ENCODE measurements at regions of chr12 and their contacts with region 1.

Region 1: GRCh38 chr12:89244536-89244935 is 107.8 kb downstream of the DUSP6 start:
- DNase-seq: peak; percentile 57
- H3K4me3 Mint-ChIP-seq: peak overlapping the region; percentile 36
- H3K27ac Mint-ChIP-seq: peak overlapping the region; percentile 73
- H3K4me1 Mint-ChIP-seq: peaks cover 33% of the 10 kb centered on the region
- H3K27me3 Mint-ChIP-seq: no peaks in the 10 kb centered on the region

Region 2: DNA sequence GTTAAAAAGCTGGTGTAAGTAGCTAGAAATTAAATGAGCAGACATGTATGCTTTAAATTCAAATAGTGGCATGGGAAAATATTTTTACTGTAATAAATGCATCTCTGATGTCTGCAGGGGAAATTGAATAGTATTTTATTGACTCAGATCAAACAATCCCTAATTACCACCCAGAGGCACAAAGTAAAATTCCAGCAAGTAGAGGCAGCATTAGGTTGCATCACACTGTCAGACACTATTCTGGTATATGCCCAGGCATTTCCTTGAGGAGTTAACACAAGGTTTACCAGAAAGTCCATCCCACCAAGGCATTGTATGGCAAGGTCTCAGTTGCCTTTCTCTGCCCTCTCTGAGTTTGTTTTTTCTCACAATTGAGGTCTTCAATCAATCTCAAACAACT is 462.6 kb before region 1 on chr12:
- CTCF ChIA-PET with region 1: no interaction called
- intact Hi-C with region 1: no loop called
- DNase-seq: no peak
- H3K4me3 Mint-ChIP-seq: no peak overlapping the region
- H3K27ac Mint-ChIP-seq: no peak overlapping the region
- H3K4me1 Mint-ChIP-seq: no peaks in the 10 kb centered on the region
- H3K27me3 Mint-ChIP-seq: no peaks in the 10 kb centered on the region

Region 3: GRCh38 chr12:89073027-89073398 is 171.5 kb before region 1 on chr12:
- CTCF ChIA-PET with region 1: no interaction called
- intact Hi-C with region 1: loop called (anchors 1 kb)
- DNase-seq: peak; percentile 32
- H3K4me3 Mint-ChIP-seq: no peak overlapping the region
- H3K27ac Mint-ChIP-seq: peak overlapping the region; percentile 57
- H3K4me1 Mint-ChIP-seq: peaks cover 36% of the 10 kb centered on the region
- H3K27me3 Mint-ChIP-seq: no peaks in the 10 kb centered on the region

Region 4: GRCh38 chr12:89181271-89181920 is 63.1 kb before region 1 on chr12:
- CTCF ChIA-PET with region 1: no interaction called
- intact Hi-C with region 1: loop called (anchors 1 kb)
- DNase-seq: no peak
- H3K4me3 Mint-ChIP-seq: no peak overlapping the region
- H3K27ac Mint-ChIP-seq: peak overlapping the region; percentile 50
- H3K4me1 Mint-ChIP-seq: peaks cover 22% of the 10 kb centered on the region
- H3K27me3 Mint-ChIP-seq: peaks cover 3% of the 10 kb centered on the region

Region 5: DNA sequence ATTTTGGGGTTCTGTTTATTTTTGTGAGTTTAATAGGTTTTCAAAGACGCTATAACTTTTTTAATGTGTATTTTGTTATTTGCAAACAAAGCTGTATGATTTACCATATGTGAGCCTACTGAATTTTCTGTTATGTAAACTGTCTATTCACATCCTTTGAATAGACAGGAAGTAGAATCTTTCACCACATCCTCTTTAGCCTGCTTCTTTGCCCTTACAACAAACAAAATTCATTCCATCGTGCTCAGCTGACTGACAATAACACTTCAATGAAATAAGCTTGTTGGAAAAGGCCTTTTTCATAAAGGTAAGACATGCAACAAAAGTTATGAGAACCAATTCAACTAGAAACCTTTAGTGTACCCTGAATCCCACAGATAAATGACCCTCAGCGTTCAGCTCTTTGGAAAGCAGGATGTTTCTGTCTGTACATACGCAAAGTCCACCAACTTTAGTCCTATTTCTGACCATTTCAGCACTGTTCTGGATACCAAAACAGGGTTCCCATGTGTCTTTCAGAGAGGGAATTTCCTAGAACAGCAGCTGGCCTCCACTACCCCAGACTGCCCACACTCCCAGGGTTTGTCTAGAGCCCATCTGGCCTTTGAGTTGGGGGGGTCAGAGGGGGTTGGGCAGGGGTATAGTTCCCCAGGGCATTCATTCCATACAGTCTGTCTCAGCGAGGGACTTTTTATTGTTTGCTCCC is 36.5 kb after region 1 on chr12:
- CTCF ChIA-PET with region 1: no interaction called
- intact Hi-C with region 1: loop called (anchors 2 kb)
- DNase-seq: no peak
- H3K4me3 Mint-ChIP-seq: peak overlapping the region; percentile 36
- H3K27ac Mint-ChIP-seq: peak overlapping the region; percentile 71
- H3K4me1 Mint-ChIP-seq: peaks cover 30% of the 10 kb centered on the region
- H3K27me3 Mint-ChIP-seq: no peaks in the 10 kb centered on the region

Region 6: DNA sequence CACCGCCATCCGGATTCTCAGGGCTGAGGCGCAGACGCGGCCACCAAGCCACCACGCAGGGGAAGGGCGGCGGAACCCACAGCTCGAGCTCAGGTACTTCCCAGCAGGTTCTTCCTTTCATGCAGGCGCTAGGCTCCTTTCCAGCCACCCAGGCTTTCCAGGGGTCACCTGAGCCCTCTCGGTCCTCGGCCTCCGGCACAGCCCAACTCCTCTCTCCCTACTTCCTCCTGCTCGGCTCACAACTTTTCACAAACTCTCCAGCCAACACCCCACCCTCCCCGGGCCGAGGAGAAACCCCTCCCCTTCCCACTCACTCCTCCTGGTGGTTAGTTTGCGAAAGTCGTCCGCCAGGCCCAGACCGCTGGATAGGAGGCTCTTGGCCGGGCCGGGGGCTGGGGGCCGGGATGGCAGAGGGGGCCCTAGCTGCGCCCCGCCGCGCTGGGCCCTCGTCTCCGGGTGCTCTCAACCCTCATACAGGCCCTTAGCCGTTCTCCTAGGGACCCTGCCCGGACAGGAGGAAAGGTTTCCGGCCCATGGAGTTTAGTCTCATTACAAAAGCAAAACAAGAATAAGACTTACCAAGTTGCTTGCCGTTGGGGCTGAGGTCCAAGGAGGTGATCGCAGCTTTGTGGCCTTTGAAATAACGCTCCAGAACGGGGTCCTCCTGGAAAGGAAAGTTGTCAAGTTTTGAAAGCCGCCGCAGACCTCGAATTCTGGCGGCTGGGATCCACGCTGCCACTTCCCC is 280.2 kb after region 1 on chr12 and contains the start of gene GALNT4:
- CTCF ChIA-PET with region 1: interaction called, 3 read pairs
- intact Hi-C with region 1: loop called (anchors 1 kb)
- DNase-seq: peak; percentile 80
- H3K4me3 Mint-ChIP-seq: peak within 1 kb of the TSS; percentile 94
- H3K27ac Mint-ChIP-seq: peak within 1 kb of the TSS; percentile 93
- H3K4me1 Mint-ChIP-seq: peaks cover 41% of the 10 kb centered on the region
- H3K27me3 Mint-ChIP-seq: no peaks in the 10 kb centered on the region
- total RNA-seq, gene GALNT4: 2.9 to 3.4 TPM